ENCODE measurements at regions of chr9 and their contacts with region 1.

Region 1: GRCh38 chr9:4762108-4762885 is 21.3 kb upstream of the AK3 start:
- H3K4me3 ChIP-seq: peak overlapping the region; percentile 22
- H3K27ac ChIP-seq: no peak overlapping the region
- H3K4me1 ChIP-seq: no peaks in the 10 kb centered on the region
- CTCF ChIP-seq: peak; percentile 78

Region 2: GRCh38 chr9:4583001-4583400 is 179.3 kb before region 1 on chr9:
- CTCF ChIA-PET with region 1: no interaction called
- POLR2A ChIA-PET with region 1: no interaction called
- H3K4me3 ChIP-seq: no peak overlapping the region
- H3K27ac ChIP-seq: no peak overlapping the region
- H3K4me1 ChIP-seq: peaks cover 2% of the 10 kb centered on the region; the same call in 1 of the 2 replicates
- CTCF ChIP-seq: no peak

Region 3: GRCh38 chr9:4717815-4718214 is 44.5 kb before region 1 on chr9:
- CTCF ChIA-PET with region 1: no interaction called
- POLR2A ChIA-PET with region 1: no interaction called
- H3K4me3 ChIP-seq: no peak overlapping the region
- H3K27ac ChIP-seq: no peak overlapping the region
- H3K4me1 ChIP-seq: no peaks in the 10 kb centered on the region
- CTCF ChIP-seq: no peak

Region 4: DNA sequence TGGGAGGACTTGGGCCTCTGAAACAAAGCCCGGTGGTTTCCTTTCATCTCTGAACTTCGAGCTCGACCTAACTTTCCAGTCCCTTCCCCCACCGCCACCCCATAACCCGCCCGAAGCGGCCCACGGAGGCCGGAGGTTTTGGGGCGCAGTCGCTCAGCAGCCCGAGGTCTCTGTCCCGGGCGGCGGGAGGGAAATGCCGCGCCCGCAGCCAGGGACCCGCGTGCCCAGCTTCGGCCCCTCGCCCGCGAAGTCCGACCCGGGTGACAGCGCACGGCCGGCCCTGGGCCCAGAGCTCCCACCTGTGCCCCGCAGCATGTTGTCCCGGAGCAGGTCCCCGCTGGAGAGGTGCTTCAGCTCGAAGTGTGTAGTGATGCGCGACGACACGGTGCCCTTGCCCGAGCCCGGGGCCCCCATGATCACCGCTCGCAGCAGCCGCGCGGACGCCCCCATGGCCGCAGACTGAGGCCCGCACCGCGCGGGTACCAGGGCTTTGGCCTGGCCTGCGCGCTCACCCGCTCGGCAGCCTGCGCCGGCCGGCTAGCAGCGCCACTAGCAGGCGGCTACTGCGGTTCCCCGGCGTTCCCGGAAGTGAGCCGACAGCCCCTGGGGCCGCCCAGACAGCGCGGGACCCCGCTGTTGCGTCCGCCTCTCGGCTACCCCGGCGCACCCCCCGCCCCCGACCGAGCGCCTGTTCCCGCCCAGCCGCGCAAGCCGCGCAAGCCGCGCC is 21.5 kb before region 1 on chr9 and contains the start of gene AK3:
- CTCF ChIA-PET with region 1: interaction called, 25 read pairs
- POLR2A ChIA-PET with region 1: interaction called, 3 read pairs
- H3K4me3 ChIP-seq: peak within 1 kb of the TSS; percentile 86
- H3K27ac ChIP-seq: peak within 1 kb of the TSS; percentile 89
- H3K4me1 ChIP-seq: no peaks in the 10 kb centered on the region
- CTCF ChIP-seq: peak; percentile 54; the same call in 1 of the 2 replicates

Region 5: DNA sequence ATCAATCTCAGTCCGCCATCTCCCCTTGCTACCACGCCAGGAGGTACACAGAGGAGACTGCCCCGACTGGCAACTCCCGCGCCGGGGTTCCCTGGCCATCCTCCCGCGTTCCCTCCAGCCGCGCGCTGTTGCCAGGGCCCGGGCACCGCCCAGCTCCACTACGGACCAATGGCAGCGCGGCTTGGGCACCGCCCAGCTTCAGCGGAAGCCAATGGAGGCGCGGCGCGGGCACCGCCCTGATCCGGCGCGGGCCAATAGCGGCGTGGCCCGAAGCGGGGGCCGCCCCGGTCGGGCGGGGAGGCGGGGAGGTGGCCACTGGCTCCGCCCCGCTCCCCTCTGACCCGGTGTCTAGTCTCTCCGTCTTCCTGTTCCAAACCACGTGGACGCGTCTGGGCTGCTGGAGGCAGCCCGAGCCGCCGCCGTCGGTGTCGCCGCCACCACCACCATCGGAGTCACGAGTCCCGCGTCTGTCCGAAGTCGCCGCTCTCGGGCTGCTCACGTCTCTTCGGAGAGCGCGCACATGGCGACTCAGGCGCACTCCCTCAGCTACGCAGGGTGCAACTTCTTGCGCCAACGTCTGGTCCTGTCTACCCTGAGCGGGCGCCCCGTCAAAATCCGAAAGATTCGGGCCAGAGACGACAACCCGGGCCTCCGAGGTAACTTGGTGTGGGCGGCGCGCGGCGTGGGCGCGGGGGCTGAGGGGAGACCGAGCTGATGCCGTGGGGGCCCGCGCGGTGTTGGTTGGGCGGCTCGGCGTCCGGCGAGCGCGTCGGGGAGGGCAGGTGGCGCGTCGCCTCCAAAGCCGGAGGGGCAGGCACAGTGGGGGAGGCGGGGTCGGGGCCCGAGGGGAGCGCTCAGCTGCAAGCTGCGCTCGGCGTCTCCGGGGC is 30.5 kb after region 1 on chr9 and contains the start of gene RCL1:
- CTCF ChIA-PET with region 1: interaction called, 11 read pairs
- POLR2A ChIA-PET with region 1: interaction called, 4 read pairs
- H3K4me3 ChIP-seq: peak within 1 kb of the TSS; percentile 96
- H3K27ac ChIP-seq: peak within 1 kb of the TSS; percentile 61; the same call in 1 of the 2 replicates
- H3K4me1 ChIP-seq: no peaks in the 10 kb centered on the region
- CTCF ChIP-seq: peak; percentile 52; the same call in 1 of the 2 replicates

Region 6: DNA sequence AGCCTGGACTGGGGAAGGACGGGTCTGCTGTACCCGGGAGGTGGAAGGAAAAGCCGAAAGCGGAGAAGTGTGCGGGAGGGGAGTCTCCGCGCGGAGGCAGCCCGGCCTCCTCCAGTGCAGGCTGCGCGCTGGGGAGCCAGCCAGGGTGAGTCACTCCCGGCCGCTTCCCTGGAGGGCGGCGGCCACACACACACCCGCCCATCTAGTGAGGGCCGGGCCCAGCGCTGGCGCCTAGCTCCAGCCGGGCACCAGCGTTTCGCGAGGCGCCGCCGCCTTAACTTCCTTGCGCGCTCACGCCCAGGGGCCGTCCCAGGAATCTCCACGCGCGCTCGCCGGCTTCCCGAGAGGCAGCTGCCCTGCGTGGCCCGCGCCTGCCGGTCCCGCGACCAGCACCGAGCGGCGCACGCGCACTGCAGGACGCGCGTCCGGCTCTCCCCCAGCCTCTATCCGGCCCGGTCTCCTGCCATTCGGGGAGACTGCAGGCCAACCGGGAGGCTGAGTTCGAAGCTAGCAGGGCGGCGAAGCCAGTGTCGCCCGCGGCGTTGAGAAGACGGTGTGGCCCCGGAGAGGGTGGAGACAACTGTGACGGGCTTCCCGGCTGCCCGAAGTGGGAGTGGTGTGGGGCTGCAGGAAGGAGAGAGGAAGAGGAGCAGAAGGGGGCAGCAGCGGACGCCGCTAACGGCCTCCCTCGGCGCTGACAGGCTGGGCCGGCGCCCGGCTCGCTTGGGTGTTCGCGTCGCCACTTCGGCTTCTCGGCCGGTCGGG is 222.5 kb after region 1 on chr9 and contains the start of gene JAK2:
- CTCF ChIA-PET with region 1: interaction called, 94 read pairs
- POLR2A ChIA-PET with region 1: interaction called, 3 read pairs
- H3K4me3 ChIP-seq: peak within 1 kb of the TSS; percentile 53
- H3K27ac ChIP-seq: peak within 1 kb of the TSS; percentile 81
- H3K4me1 ChIP-seq: no peaks in the 10 kb centered on the region
- CTCF ChIP-seq: peak; percentile 89